ENCODE measurements at regions of chr1 and their contacts with region 1.

Region 1: GRCh38 chr1:206912445-206913095 is 9.2 kb downstream of the FCMR start:
- DNase-seq: peak; percentile 46 to 72 (median 56)
- H3K4me3 ChIP-seq: no peak overlapping the region
- H3K27ac ChIP-seq: no peak overlapping the region
- H3K4me1 ChIP-seq: peaks cover 4% of the 10 kb centered on the region
- H3K27me3 ChIP-seq: no peaks in the 10 kb centered on the region
- CTCF ChIP-seq: peak; percentile 59 to 75 (median 71)
- EP300 ChIP-seq: no peak
- POLR2A ChIP-seq: no peak

Region 2: GRCh38 chr1:206469933-206470691 is 442.5 kb before region 1 on chr1 and contains the start of gene IKBKE:
- intact Hi-C with region 1: loop called in 2 of 4 experiments (anchors 10 kb)
- DNase-seq: peak in 3 of 5 donors; percentile 30 to 55 (median 46)
- H3K4me3 ChIP-seq: peak within 1 kb of the TSS; percentile 47
- H3K27ac ChIP-seq: no peak within 1 kb of the TSS
- H3K4me1 ChIP-seq: peaks cover 9% of the 10 kb centered on the region
- H3K27me3 ChIP-seq: no peaks in the 10 kb centered on the region
- CTCF ChIP-seq: no peak
- EP300 ChIP-seq: no peak
- POLR2A ChIP-seq: no peak
- total RNA-seq, gene IKBKE: 0.86 to 3.9 (median 2.6) TPM

Region 3: DNA sequence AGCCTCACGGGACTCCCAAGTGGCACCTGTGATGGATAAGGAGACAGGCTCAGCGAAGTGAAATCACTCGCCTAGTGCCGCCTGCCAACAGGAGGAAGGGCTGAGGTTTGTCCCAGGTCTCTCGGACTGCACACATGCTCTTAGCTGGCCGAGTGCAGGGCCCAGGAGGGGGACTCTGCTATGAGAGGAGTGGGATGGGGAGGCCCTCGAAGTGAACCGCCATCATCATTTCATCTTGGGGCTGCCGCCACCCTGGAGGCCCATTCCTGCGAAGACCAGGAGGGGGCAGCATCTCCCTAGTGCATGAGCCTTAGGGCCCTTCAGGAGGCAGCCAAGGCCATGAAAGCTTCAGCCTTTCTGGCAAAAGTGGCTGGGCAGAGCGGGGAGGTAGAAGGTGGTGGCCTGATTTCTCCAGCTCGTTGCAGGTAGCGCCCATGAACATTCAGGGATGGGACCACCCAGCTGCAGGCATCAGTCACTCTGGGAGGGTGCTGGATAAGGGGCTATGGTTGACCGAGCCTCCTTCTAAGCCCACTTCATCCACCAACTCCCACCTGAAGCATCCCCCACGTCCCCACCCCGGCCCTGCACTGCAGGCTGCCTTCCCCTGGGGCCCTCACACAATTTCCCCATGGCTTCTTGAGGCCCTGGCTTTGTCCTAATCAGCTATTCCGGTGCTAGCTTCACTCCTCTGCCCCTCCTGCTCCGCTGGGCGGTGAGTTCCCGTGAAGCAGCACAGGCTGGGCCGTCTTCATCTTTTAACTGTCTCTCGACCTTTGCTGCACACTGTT is 422.4 kb before region 1 on chr1:
- intact Hi-C with region 1: loop called in 2 of 4 experiments (anchors 5 to 10 kb)
- DNase-seq: peak; percentile 70 to 85 (median 84)
- H3K4me3 ChIP-seq: no peak overlapping the region
- H3K27ac ChIP-seq: no peak overlapping the region
- H3K4me1 ChIP-seq: no peaks in the 10 kb centered on the region
- H3K27me3 ChIP-seq: no peaks in the 10 kb centered on the region
- CTCF ChIP-seq: peak; percentile 81 to 93 (median 88)
- EP300 ChIP-seq: no peak
- POLR2A ChIP-seq: no peak

Region 4: GRCh38 chr1:206628916-206629315 is 283.7 kb before region 1 on chr1:
- intact Hi-C with region 1: loop called (anchors 5 to 10 kb)
- DNase-seq: no peak
- H3K4me3 ChIP-seq: no peak overlapping the region
- H3K27ac ChIP-seq: no peak overlapping the region
- H3K4me1 ChIP-seq: no peaks in the 10 kb centered on the region
- H3K27me3 ChIP-seq: no peaks in the 10 kb centered on the region
- CTCF ChIP-seq: no peak
- EP300 ChIP-seq: no peak
- POLR2A ChIP-seq: no peak

Region 5: DNA sequence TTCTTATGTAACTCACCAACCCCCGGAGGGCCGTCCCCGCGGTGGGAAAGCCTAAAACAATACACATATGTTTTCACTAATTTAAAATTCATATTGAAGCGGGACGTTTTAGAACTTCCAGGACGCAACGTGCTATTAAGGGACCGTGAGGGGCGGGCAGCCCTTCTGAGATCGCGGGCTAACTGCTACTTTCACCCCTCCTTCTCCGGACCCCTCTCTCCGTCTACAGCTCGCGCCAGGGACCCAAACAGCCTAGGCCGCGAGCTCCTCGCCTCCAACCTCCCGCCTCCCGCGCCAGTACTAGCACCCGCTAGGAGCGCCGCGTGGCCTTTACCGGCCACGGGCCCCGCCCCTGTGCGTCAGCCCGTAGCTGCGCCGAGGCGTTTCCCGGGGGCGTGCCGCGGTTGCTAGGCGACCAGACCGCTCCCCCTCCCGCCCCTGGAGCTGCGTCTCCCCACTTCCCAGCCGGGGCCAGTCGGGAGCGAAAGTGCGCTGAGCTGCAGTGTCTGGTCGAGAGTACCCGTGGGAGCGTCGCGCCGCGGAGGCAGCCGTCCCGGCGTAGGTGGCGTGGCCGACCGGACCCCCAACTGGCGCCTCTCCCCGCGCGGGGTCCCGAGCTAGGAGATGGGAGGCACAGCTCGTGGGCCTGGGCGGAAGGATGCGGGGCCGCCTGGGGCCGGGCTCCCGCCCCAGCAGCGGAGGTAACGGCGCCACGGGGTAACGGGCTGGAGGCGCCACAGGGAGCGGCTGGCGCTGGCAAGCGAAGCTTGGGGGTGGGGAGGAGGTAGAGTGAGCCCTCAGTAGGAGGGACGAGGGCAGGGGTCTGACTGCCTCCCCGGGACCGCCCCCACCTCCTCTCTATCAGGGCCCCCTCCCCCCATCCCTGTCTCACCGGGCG is 277.2 kb before region 1 on chr1 and contains the start of gene DYRK3:
- intact Hi-C with region 1: loop called in 3 of 4 experiments (anchors 5 kb)
- DNase-seq: peak; percentile 96 to 98 (median 97)
- H3K4me3 ChIP-seq: peak within 1 kb of the TSS; percentile 95
- H3K27ac ChIP-seq: peak within 1 kb of the TSS; percentile 48 to 78
- H3K4me1 ChIP-seq: peaks cover 1% of the 10 kb centered on the region
- H3K27me3 ChIP-seq: no peaks in the 10 kb centered on the region
- CTCF ChIP-seq: peak in 1 of 3 donors; percentile 49
- EP300 ChIP-seq: peak; percentile 60
- POLR2A ChIP-seq: peak; percentile 97
- total RNA-seq, gene DYRK3: 5.5 to 15.0 (median 10.1) TPM

Region 6: DNA sequence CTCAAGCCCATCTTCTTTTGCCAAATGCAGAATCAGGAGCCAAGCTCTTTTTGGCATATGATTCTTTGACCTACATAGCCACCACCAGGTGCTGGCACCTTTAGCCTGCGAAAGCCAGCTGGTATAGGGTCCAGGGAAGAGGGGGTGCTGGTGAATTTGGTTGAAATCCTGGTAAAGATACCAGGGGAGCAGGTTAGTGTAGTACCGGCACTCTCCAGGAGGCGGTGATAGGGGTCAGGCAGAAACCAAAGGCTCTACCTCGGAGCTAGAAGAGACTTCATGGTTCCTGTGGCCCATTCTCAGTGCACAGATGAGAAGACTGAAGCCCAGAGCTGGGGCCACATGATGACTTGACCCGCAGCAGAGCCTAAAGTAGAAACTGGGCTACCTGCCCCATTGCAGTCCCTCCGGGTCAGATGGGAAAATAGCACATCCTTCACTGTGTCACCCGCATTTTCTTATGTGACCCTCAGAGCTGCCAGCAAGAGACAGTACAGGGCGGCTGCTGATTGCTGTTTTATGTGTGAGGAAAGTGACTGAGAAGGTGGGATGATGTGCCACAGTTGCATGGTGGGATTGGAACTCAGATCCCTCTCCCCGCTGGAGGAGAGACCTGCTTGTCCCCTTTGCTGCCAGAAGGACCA is 177.9 kb before region 1 on chr1:
- intact Hi-C with region 1: loop called in 3 of 4 experiments (anchors 5 to 10 kb)
- DNase-seq: peak in 3 of 5 donors; percentile 54 to 63 (median 56)
- H3K4me3 ChIP-seq: no peak overlapping the region
- H3K27ac ChIP-seq: no peak overlapping the region
- H3K4me1 ChIP-seq: no peaks in the 10 kb centered on the region
- H3K27me3 ChIP-seq: no peaks in the 10 kb centered on the region
- CTCF ChIP-seq: peak in 2 of 3 donors; percentile 39 to 40
- EP300 ChIP-seq: no peak
- POLR2A ChIP-seq: no peak

Region 7: GRCh38 chr1:206878456-206878855 is 34.1 kb before region 1 on chr1:
- intact Hi-C with region 1: no loop called
- DNase-seq: no peak
- H3K4me3 ChIP-seq: no peak overlapping the region
- H3K27ac ChIP-seq: no peak overlapping the region
- H3K4me1 ChIP-seq: no peaks in the 10 kb centered on the region
- H3K27me3 ChIP-seq: no peaks in the 10 kb centered on the region
- CTCF ChIP-seq: no peak
- EP300 ChIP-seq: no peak
- POLR2A ChIP-seq: no peak

Region 8: GRCh38 chr1:207077470-207078377 is 165.2 kb after region 1 on chr1:
- intact Hi-C with region 1: loop called in 1 of 4 experiments (anchors 10 kb)
- DNase-seq: peak in 4 of 5 donors; percentile 30 to 74 (median 45)
- H3K4me3 ChIP-seq: no peak overlapping the region
- H3K27ac ChIP-seq: no peak overlapping the region
- H3K4me1 ChIP-seq: no peaks in the 10 kb centered on the region
- H3K27me3 ChIP-seq: no peaks in the 10 kb centered on the region
- CTCF ChIP-seq: peak; percentile 71 to 80 (median 79)
- EP300 ChIP-seq: no peak
- POLR2A ChIP-seq: no peak

Measured in ovary (tissue), 10 donors.